ENCODE measurements at regions of chr1 and their contacts with region 1.

Region 1: GRCh38 chr1:207579436-207579799 is 65.5 kb upstream of the CR1L start:
- DNase-seq: peak; percentile 6
- H3K4me3 ChIP-seq: no peak overlapping the region
- H3K27me3 ChIP-seq: no peaks in the 10 kb centered on the region
- CTCF ChIP-seq: peak; percentile 68

Region 2: DNA sequence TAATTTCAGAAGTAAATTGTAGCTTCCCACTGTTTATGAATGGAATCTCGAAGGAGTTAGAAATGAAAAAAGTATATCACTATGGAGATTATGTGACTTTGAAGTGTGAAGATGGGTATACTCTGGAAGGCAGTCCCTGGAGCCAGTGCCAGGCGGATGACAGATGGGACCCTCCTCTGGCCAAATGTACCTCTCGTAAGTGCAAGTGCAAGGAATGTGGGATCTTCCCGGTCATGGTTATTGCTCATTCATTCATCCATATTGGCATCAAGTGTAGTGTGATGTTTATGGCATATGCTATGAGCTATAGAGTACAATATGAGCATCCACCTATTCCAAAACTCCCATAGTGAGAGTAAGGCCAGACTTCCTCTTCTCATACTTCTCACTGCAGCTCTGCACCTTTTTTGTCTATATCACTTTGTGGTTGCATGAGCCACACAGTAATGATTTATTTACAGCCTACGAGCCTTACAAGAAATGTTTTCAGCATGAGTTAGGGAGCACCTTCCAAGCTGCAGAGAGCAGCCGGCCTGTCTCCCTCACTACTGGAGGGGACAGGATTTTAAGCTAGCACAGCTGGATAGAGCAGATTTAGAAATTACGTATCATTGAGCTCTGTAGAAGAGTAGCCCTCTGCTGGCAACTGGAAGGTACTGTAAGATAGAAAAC is 40.6 kb after region 1 on chr1:
- CTCF ChIA-PET with region 1: interaction called, 11 read pairs
- POLR2A ChIA-PET with region 1: no interaction called
- DNase-seq: no peak
- H3K4me3 ChIP-seq: no peak overlapping the region
- H3K27me3 ChIP-seq: no peaks in the 10 kb centered on the region
- CTCF ChIP-seq: peak; percentile 86

Region 3: GRCh38 chr1:207698822-207699483 is 119.5 kb after region 1 on chr1:
- CTCF ChIA-PET with region 1: interaction called, 17 read pairs
- POLR2A ChIA-PET with region 1: no interaction called
- DNase-seq: no peak
- H3K4me3 ChIP-seq: no peak overlapping the region
- H3K27me3 ChIP-seq: no peaks in the 10 kb centered on the region
- CTCF ChIP-seq: peak; percentile 75

Measured in BJ (cell line).